ENCODE measurements at regions of chr4 and their contacts with region 1.

Region 1: GRCh38 chr4:5192283-5193077 is 141.2 kb downstream of the STK32B start:
- DNase-seq: no peak
- H3K4me3 ChIP-seq: no peak overlapping the region
- H3K27ac ChIP-seq: no peak overlapping the region
- H3K4me1 ChIP-seq: no peaks in the 10 kb centered on the region
- H3K27me3 ChIP-seq: no peaks in the 10 kb centered on the region
- CTCF ChIP-seq: no peak
- EP300 ChIP-seq: no peak
- POLR2A ChIP-seq: no peak

Region 2: GRCh38 chr4:4455210-4455865 is 737.1 kb before region 1 on chr4:
- intact Hi-C with region 1: no loop called
- DNase-seq: no peak
- H3K4me3 ChIP-seq: no peak overlapping the region
- H3K27ac ChIP-seq: no peak overlapping the region
- H3K4me1 ChIP-seq: no peaks in the 10 kb centered on the region
- H3K27me3 ChIP-seq: no peaks in the 10 kb centered on the region
- CTCF ChIP-seq: no peak
- EP300 ChIP-seq: no peak
- POLR2A ChIP-seq: no peak

Region 3: DNA sequence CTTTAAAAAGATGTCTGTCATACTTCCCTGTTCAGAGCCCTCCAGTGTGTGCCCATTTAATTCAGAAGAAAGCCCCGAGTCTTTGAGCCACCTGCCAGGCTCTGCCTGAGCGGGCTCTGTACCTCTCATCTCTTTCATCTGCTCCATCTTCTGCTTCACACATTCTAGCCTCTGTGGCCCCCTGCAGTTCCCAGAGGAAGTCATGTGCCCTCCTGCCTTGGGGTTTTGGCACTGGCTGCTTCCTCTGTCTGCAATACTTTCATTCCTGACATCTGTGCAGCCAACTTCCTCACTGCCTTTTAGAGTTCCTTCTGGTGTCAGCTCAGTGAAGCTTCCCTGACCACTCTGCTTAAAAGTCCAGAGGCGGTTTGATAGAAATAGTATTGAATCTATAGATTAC is 147.4 kb before region 1 on chr4:
- intact Hi-C with region 1: no loop called
- DNase-seq: no peak
- H3K4me3 ChIP-seq: no peak overlapping the region
- H3K27ac ChIP-seq: no peak overlapping the region
- H3K4me1 ChIP-seq: no peaks in the 10 kb centered on the region
- H3K27me3 ChIP-seq: no peaks in the 10 kb centered on the region
- CTCF ChIP-seq: no peak
- EP300 ChIP-seq: no peak
- POLR2A ChIP-seq: no peak

Region 4: DNA sequence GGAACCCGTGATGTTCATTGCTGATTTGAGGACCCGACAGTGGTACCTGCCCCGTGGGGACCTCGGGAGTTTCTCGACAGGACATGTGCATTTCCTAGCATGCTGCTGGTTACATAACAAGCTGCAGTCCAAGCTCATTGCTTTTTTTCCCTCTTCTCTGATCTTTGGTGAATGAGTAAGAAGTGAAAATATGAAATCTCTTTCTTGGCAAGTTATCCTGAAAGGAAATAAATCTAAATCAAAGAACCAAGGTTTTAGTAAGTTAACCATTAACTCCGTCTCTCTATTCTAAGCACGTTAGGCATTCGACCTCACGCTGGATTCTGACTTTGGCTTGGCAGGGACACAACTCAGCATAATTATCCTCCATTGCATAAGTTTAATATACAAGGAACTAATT is 54.6 kb before region 1 on chr4:
- intact Hi-C with region 1: loop called in 1 of 4 experiments (anchors 5 kb)
- DNase-seq: no peak
- H3K4me3 ChIP-seq: no peak overlapping the region
- H3K27ac ChIP-seq: no peak overlapping the region
- H3K4me1 ChIP-seq: no peaks in the 10 kb centered on the region
- H3K27me3 ChIP-seq: no peaks in the 10 kb centered on the region
- CTCF ChIP-seq: no peak
- EP300 ChIP-seq: no peak
- POLR2A ChIP-seq: no peak

Region 5: GRCh38 chr4:5511791-5512190 is 319.3 kb after region 1 on chr4:
- intact Hi-C with region 1: no loop called
- DNase-seq: no peak
- H3K4me3 ChIP-seq: no peak overlapping the region
- H3K27ac ChIP-seq: no peak overlapping the region
- H3K4me1 ChIP-seq: no peaks in the 10 kb centered on the region
- H3K27me3 ChIP-seq: no peaks in the 10 kb centered on the region
- CTCF ChIP-seq: no peak
- EP300 ChIP-seq: no peak
- POLR2A ChIP-seq: no peak

Region 6: DNA sequence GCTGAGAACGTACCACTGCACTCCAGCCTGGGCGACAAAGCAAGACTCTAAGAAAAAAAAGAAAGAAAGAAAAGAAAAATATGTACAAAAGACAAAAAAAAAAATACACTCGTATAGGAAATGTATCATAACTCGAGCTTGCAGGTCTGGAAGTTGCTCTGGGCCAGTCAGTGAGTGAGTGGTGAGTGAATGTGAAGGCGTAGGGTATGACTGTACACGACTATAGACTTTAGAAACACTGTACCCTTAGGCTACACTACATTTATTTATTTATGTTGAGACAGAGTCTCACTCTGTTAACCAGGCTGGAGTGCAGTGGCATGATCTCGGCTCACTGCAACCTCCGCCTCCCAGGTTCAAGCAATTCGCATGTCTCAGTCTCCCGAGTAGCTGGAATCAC is 486.5 kb after region 1 on chr4:
- intact Hi-C with region 1: no loop called
- DNase-seq: no peak
- H3K4me3 ChIP-seq: no peak overlapping the region
- H3K27ac ChIP-seq: no peak overlapping the region
- H3K4me1 ChIP-seq: no peaks in the 10 kb centered on the region
- H3K27me3 ChIP-seq: no peaks in the 10 kb centered on the region
- CTCF ChIP-seq: no peak
- EP300 ChIP-seq: no peak
- POLR2A ChIP-seq: no peak

Measured in ovary (tissue), 10 donors.